Breast epithelium (tissue), 4 donors: ENCODE measurements at regions of chr6 and their contacts with region 1.

Region 1: DNA sequence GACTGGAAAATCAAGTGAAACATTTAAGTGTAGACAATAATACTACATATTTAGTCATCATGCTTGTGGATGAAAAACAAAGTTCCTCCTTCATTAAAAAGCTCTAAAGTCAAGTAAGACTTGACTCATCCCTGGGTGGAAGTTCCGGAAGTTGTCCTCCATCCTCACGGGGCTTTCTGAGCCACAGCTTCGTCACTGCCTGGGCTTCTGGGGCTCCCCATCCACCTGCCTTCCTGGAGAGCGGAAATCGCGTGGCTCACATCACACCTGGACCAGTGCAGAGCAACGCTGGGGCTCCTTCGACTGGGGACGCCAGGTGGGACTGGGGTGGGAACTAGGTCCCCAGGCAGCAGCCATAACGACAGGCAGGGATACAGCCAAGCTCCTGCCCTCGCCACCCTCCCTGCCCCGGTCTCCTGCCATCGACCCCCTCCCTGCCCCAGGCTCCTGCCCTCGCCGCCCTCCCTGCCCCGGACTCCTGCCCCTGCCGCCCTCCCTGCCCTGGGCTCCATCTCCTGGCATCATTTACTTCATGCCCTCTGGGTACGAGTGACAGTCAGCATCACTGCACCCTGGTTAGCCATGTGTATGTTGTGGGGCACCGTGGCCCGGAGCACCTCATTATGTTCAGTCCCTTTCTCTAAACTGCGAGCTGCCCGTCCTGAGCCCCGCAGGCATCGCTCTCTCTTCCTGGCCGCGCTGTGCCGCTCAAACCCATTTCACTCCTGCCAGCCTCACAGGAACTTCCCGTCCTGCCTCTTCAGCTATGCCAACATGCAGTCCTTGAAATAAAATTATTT is 12.9 kb downstream of the THBS2 start:
- DNase-seq: peak in 1 of 2 donors; percentile 40
- H3K4me3 ChIP-seq: peak overlapping the region in 2 of 3 donors; percentile 5 to 33
- H3K27ac ChIP-seq: peak overlapping the region; percentile 82 to 89
- H3K4me1 ChIP-seq: no peaks in the 10 kb centered on the region
- H3K27me3 ChIP-seq: no peaks in the 10 kb centered on the region
- CTCF ChIP-seq: no peak
- POLR2A ChIP-seq: no peak

Region 2: GRCh38 chr6:168785720-168786511 is 454.9 kb before region 1 on chr6:
- intact Hi-C with region 1: loop called (anchors 5 kb)
- DNase-seq: no peak
- H3K4me3 ChIP-seq: no peak overlapping the region
- H3K27ac ChIP-seq: no peak overlapping the region
- H3K4me1 ChIP-seq: no peaks in the 10 kb centered on the region
- H3K27me3 ChIP-seq: no peaks in the 10 kb centered on the region
- CTCF ChIP-seq: no peak
- POLR2A ChIP-seq: no peak